Left ventricle myocardium superior (tissue), 1 donor: ENCODE measurements at regions of chr17 and their contacts with region 1.

Region 1: GRCh38 chr17:9729034-9729650 is 62.2 kb downstream of the DHRS7C start:
- DNase-seq: no peak
- ATAC-seq: peak; percentile 65

Region 2: GRCh38 chr17:9371019-9371418 is 358.1 kb before region 1 on chr17:
- intact Hi-C with region 1: no loop called
- DNase-seq: no peak
- ATAC-seq: peak; percentile 81

Region 3: DNA sequence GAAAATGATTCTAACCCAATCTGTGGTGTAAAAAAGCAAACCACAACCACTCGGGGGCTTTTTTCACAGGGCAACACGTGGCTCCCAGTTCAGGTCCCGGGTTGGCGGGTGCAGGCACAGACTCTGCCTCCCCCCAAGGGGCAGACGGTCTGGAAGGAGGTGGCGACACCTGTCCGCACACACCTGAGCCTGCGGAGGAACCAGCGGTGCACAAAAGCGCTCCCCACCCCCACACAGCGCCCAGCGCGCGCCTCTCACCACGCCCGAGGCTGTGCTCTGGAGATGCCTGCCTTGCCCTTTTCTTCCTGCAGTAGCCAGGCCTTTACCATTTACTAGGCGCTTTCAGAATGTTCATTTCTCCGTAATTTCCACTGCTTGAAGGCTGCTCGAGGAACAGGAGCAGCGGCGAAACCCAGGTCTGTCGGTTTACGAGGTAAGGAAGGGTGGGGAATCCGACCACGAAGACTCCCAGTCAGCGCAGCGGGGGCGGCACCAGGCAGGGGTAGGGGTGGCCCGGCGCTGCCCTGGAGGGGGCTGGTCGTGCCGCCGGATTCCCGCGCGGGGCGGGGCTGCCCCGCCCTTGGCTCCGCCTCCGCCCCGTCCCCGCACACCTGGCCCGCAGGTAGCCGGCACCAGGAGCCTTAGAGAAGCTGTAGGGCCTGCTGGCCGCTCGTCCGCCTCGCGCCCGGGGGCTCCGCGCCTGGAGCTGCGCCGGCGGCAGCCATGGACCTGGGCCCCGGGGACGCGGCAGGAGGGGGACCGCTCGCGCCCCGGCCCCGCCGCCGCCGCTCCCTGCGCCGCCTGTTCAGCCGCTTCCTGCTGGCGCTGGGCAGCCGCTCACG is 84.0 kb before region 1 on chr17 and contains the start of gene USP43:
- intact Hi-C with region 1: no loop called
- DNase-seq: peak; percentile 28
- ATAC-seq: peak; percentile 69
- total RNA-seq, gene USP43: 0.12 TPM

Region 4: DNA sequence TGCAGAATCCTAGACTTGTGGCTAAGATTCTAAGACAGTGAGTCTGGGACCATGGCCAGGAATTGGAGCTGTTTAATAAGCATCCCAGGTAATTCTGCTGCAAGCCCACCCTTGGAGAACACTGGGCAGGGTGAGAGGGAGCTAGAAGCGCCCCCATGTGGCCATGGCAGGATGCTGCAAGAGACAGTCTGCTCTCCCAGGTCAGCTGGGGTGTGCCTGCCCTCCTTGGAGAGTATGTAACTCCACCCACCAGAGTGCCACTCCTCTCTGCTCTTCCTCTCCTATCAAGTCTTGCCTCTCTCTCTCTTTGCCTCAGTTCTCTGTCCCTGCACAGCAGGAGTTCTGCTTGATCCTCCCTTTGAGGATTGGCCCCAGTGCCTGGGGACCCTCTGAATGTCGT is 161.0 kb after region 1 on chr17:
- intact Hi-C with region 1: loop called (anchors 5 kb)
- DNase-seq: peak; percentile 50
- ATAC-seq: peak; percentile 75